GM12878 (cell line): ENCODE measurements at regions of chr17 and their contacts with region 1.

Region 1: GRCh38 chr17:28960256-28961061 is 9.1 kb upstream of the PHF12 start:
- DNase-seq: no peak
- ATAC-seq: no peak
- H3K4me3 ChIP-seq: no peak overlapping the region
- H3K27ac ChIP-seq: no peak overlapping the region
- H3K4me1 ChIP-seq: no peaks in the 10 kb centered on the region
- H3K27me3 ChIP-seq: peaks cover 0 to 2% of the 10 kb centered on the region in 2 experiments; a peak in 1 of 4 replicates
- CTCF ChIP-seq: no peak
- EP300 ChIP-seq: no peak
- POLR2A ChIP-seq: no peak
- RAD21 ChIP-seq: no peak

Region 2: GRCh38 chr17:29010586-29010985 is 50.1 kb after region 1 on chr17:
- CTCF ChIA-PET with region 1: interaction called, 14 read pairs
- POLR2A ChIA-PET with region 1: no interaction called
- RAD21 ChIA-PET with region 1: no interaction called
- SMC1A ChIA-PET with region 1: no interaction called
- in situ Hi-C with region 1: no loop called
- intact Hi-C with region 1: no loop called
- DNase-seq: no peak
- ATAC-seq: no peak
- H3K4me3 ChIP-seq: no peak overlapping the region
- H3K27ac ChIP-seq: no peak overlapping the region
- H3K4me1 ChIP-seq: no peaks in the 10 kb centered on the region
- H3K27me3 ChIP-seq: peaks cover 0 to 2% of the 10 kb centered on the region in 2 experiments; a peak in 3 of 4 replicates
- CTCF ChIP-seq: no peak
- EP300 ChIP-seq: no peak
- POLR2A ChIP-seq: no peak
- RAD21 ChIP-seq: no peak

Region 3: DNA sequence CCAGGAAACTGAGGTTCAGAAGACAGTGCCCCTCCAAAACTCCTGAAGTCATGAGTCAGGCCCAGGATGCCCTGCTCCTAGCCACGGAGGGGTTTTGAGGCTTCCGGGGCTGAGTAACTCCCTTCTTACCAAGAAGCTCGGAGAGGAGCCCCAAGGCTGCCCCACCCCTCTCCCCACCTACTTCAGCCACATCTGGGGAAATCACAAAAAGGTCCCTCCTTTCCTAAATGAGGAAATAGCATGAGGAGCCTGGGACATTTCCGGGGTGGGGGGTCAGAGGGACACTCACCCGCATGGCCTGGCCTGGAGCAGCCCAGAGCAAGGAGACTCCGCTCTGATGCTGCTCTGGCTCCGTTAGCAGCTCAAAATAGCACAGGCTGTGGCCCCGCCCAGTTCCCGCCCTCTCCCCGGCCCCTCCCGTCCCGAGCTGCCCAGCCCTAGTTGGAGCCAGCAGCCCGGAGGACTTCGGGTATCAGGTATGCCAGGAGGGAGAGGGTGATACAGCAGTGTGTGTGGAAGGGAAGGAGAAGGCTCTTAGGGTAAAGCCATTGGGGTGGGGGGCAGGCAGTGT is 179.7 kb after region 1 on chr17:
- CTCF ChIA-PET with region 1: interaction called, 17 read pairs
- POLR2A ChIA-PET with region 1: no interaction called
- RAD21 ChIA-PET with region 1: interaction called, 8 read pairs
- SMC1A ChIA-PET with region 1: interaction called, 4 read pairs
- in situ Hi-C with region 1: no loop called
- intact Hi-C with region 1: no loop called
- DNase-seq: no peak
- ATAC-seq: peak; percentile 82
- H3K4me3 ChIP-seq: peak overlapping the region; percentile 81
- H3K27ac ChIP-seq: peak overlapping the region; percentile 76
- H3K4me1 ChIP-seq: peaks cover 31% of the 10 kb centered on the region
- H3K27me3 ChIP-seq: no peaks in the 10 kb centered on the region
- CTCF ChIP-seq: no peak
- EP300 ChIP-seq: no peak
- POLR2A ChIP-seq: peak; percentile 81
- RAD21 ChIP-seq: no peak

Region 4: DNA sequence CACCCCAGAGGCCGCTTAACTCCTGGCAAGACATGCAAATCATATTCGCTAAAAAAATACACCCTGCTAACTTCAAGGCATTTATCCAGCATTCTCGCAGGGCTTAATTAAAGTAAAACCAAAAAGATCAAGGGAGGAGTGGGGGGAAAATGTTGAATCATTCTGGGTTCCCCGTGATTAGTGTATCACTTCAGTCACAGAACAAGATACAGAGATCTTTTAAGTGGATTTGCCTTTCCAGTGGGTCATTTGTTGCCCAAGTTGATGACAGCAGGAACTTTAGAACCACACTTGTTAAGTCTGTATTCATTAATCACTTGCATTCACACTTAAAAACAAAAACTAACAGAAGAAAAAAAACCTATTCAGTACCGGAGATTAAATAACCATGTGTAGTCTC is 303.5 kb after region 1 on chr17:
- CTCF ChIA-PET with region 1: no interaction called
- POLR2A ChIA-PET with region 1: no interaction called
- RAD21 ChIA-PET with region 1: no interaction called
- SMC1A ChIA-PET with region 1: no interaction called
- in situ Hi-C with region 1: no loop called
- intact Hi-C with region 1: no loop called
- DNase-seq: no peak
- ATAC-seq: no peak
- H3K4me3 ChIP-seq: no peak overlapping the region
- H3K27ac ChIP-seq: no peak overlapping the region
- H3K4me1 ChIP-seq: no peaks in the 10 kb centered on the region
- H3K27me3 ChIP-seq: no peaks in the 10 kb centered on the region
- CTCF ChIP-seq: no peak
- EP300 ChIP-seq: no peak
- POLR2A ChIP-seq: no peak
- RAD21 ChIP-seq: no peak